ENCODE measurements at regions of chr16 and their contacts with region 1.

Region 1: GRCh38 chr16:26963114-26963513 is 103.6 kb upstream of the C16orf82 start:
- DNase-seq: no peak

Region 2: GRCh38 chr16:26863931-26864330 is 99.2 kb before region 1 on chr16:
- in situ Hi-C with region 1: loop called (anchors 25 kb)
- DNase-seq: no peak